CD4-positive, alpha-beta memory T cell (primary cell): ENCODE measurements at regions of chr6 and their contacts with region 1.

Region 1: GRCh38 chr6:127302728-127303660 is 36.3 kb downstream of the RNF146 start:
- DNase-seq: peak; percentile 31 to 55 (median 51)
- H3K4me3 ChIP-seq: no peak overlapping the region
- H3K4me3 Mint-ChIP-seq: no peak overlapping the region
- H3K27ac ChIP-seq: no peak overlapping the region
- H3K27ac Mint-ChIP-seq: peak overlapping the region in 1 of 7 donors; percentile 6
- H3K4me1 ChIP-seq: no peaks in the 10 kb centered on the region
- H3K4me1 Mint-ChIP-seq: peaks cover 22 to 43% (median 30%) of the 10 kb centered on the region in 4 donors
- H3K27me3 ChIP-seq: no peaks in the 10 kb centered on the region
- H3K27me3 Mint-ChIP-seq: no peaks in the 10 kb centered on the region

Region 2: GRCh38 chr6:127317388-127318128 is 14.6 kb after region 1 on chr6:
- CTCF ChIA-PET with region 1: interaction called, 23 read pairs
- POLR2A ChIA-PET with region 1: interaction called, 3 read pairs
- intact Hi-C with region 1: no loop called
- DNase-seq: no peak
- H3K4me3 ChIP-seq: no peak overlapping the region
- H3K4me3 Mint-ChIP-seq: no peak overlapping the region
- H3K27ac ChIP-seq: no peak overlapping the region
- H3K27ac Mint-ChIP-seq: no peak overlapping the region
- H3K4me1 ChIP-seq: no peaks in the 10 kb centered on the region
- H3K4me1 Mint-ChIP-seq: peaks cover 0 to 19% (median 14%) of the 10 kb centered on the region in 4 donors
- H3K27me3 ChIP-seq: no peaks in the 10 kb centered on the region
- H3K27me3 Mint-ChIP-seq: no peaks in the 10 kb centered on the region

Region 3: GRCh38 chr6:127420556-127420955 is 117.6 kb after region 1 on chr6:
- CTCF ChIA-PET with region 1: interaction called, 60 read pairs
- POLR2A ChIA-PET with region 1: no interaction called
- intact Hi-C with region 1: loop called (anchors 1 kb)
- DNase-seq: peak; percentile 45 to 85 (median 58)
- H3K4me3 ChIP-seq: no peak overlapping the region
- H3K4me3 Mint-ChIP-seq: no peak overlapping the region
- H3K27ac ChIP-seq: no peak overlapping the region
- H3K27ac Mint-ChIP-seq: peak overlapping the region in 4 of 7 donors; percentile 1 to 49 (median 38)
- H3K4me1 ChIP-seq: no peaks in the 10 kb centered on the region
- H3K4me1 Mint-ChIP-seq: peaks cover 5 to 7% (median 6%) of the 10 kb centered on the region in 4 donors
- H3K27me3 ChIP-seq: no peaks in the 10 kb centered on the region
- H3K27me3 Mint-ChIP-seq: no peaks in the 10 kb centered on the region

Region 4: DNA sequence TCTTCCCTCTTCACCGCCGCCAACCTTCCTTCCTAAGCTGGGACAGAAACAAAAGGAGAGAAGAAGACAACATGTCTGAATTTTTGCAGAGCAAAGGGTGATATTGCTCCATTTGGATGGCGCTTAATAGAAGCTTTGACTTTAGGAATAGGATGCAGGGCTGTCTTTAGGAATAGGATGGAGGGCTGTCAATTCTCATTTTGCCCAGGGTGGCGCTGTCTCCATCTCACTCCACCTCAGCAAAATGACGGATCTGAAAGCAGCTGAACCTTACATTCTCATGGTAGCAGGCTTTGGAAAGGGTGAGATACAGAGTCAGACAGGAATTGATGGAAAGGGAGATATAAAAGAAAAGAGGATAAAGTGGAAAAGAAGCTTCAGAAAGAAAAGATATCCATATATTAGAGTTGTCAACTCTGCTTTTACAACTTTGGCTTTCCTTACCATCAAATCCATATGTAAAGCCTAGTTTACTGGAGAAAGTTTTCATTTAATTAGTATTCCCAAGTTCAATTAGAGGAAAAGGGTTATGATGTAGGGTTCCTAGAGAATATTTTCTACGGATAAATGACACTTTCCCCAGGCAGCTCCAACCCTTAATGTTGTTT is 213.8 kb after region 1 on chr6:
- CTCF ChIA-PET with region 1: interaction called, 16 read pairs
- POLR2A ChIA-PET with region 1: no interaction called
- intact Hi-C with region 1: no loop called
- DNase-seq: peak in 4 of 5 donors; percentile 51 to 60 (median 53)
- H3K4me3 ChIP-seq: peak overlapping the region; percentile 54 to 61
- H3K4me3 Mint-ChIP-seq: peak overlapping the region; percentile 83 to 96 (median 92)
- H3K27ac ChIP-seq: peak overlapping the region; percentile 50
- H3K27ac Mint-ChIP-seq: peak overlapping the region; percentile 43 to 93 (median 88)
- H3K4me1 ChIP-seq: peaks cover 40% of the 10 kb centered on the region
- H3K4me1 Mint-ChIP-seq: peaks cover 26 to 51% (median 38%) of the 10 kb centered on the region in 4 donors
- H3K27me3 ChIP-seq: peaks cover 16% of the 10 kb centered on the region
- H3K27me3 Mint-ChIP-seq: peaks cover 14 to 21% of the 10 kb centered on the region in 2 donors